GM23248 (cell line): ENCODE measurements at regions of chr19 and their contacts with region 1.

Region 1: GRCh38 chr19:2151339-2152229 is at the start of gene AP3D1:
- DNase-seq: peak; percentile 100
- H3K4me3 ChIP-seq: peak within 1 kb of the TSS; percentile 98
- H3K27ac ChIP-seq: peak within 1 kb of the TSS; percentile 84
- H3K4me1 ChIP-seq: peaks cover 24% of the 10 kb centered on the region
- H3K27me3 ChIP-seq: no peaks in the 10 kb centered on the region
- total RNA-seq, gene AP3D1: 95.4 and 97.6 TPM in 2 replicates

Region 2: GRCh38 chr19:2391118-2391725 is 239.6 kb after region 1 on chr19:
- in situ Hi-C with region 1: loop called (anchors 10 kb)
- DNase-seq: peak; percentile 84
- H3K4me3 ChIP-seq: no peak overlapping the region
- H3K27ac ChIP-seq: no peak overlapping the region
- H3K4me1 ChIP-seq: no peaks in the 10 kb centered on the region
- H3K27me3 ChIP-seq: no peaks in the 10 kb centered on the region